Naive thymus-derived CD8-positive, alpha-beta T cell (primary cell): ENCODE measurements at regions of chr1 and their contacts with region 1.

Region 1: GRCh38 chr1:44819608-44820327 is 11.4 kb downstream of the BTBD19 start:
- DNase-seq: peak; percentile 61 to 98 (median 80)
- ATAC-seq: peak; percentile 78 to 79
- H3K4me3 Mint-ChIP-seq: peak overlapping the region; percentile 92 to 97 (median 94)
- H3K27ac Mint-ChIP-seq: peak overlapping the region; percentile 100
- H3K4me1 Mint-ChIP-seq: peaks cover 23 to 55% (median 42%) of the 10 kb centered on the region in 4 donors
- H3K27me3 Mint-ChIP-seq: no peaks in the 10 kb centered on the region

Region 2: DNA sequence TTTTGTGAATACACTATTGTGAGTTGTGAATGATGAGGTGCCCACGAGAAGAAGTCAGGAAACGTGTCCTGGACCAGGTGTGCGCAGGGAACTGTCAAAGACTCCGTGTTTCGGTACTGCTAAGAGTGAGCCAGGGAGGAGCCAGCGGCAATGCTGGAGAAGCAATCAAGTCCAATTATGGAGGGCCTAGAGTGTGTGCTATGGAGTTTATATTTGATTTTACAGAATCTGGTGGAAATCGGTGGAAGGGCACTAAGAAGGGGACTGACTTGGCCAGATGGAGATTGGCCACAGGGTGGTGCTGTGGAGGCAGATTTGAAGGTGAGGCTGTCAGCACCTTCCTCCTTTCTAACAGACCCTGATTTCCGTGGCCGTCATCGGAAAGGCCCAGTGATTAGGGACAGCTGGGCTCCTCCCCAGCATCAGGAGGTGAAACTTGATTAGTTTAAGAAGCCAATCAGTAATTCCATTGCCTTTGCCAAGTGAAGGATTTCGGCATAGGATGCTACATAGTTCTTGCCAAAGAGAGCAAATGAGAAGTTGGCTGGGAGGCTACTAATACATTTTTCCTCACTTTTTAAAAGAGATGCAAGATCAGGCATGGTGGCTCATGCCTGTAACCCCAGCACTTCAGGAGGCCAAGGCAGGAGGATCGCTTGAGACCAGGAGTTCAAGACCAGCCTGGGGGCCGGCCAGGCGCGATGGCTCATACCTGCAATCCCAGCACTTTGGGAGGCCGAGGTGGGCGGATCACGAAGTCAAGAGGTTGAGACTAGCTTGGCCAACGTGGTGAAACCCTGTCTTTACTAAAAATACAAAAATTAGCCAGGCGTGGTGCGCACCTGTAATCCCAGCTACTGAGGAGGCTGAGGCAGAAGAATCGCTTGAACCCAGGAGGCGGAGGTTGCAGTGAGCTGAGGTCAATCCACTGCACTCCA is 16.2 kb after region 1 on chr1:
- POLR2A ChIA-PET with region 1: interaction called, 17 read pairs
- DNase-seq: peak; percentile 65 to 92 (median 78)
- ATAC-seq: peak; percentile 97 to 98
- H3K4me3 Mint-ChIP-seq: peak overlapping the region in 9 of 10 donors; percentile 23 to 58 (median 47)
- H3K27ac Mint-ChIP-seq: peak overlapping the region in 7 of 10 donors; percentile 4 to 67 (median 34)
- H3K4me1 Mint-ChIP-seq: peaks cover 7 to 11% (median 9%) of the 10 kb centered on the region in 4 donors
- H3K27me3 Mint-ChIP-seq: peaks cover 0 to 8% (median 0%) of the 10 kb centered on the region in 5 donors

Region 3: GRCh38 chr1:45187725-45188124 is 368.0 kb after region 1 on chr1:
- POLR2A ChIA-PET with region 1: no interaction called
- DNase-seq: no peak
- ATAC-seq: no peak
- H3K4me3 Mint-ChIP-seq: no peak overlapping the region
- H3K27ac Mint-ChIP-seq: no peak overlapping the region
- H3K4me1 Mint-ChIP-seq: peaks cover 0 to 2% (median 2%) of the 10 kb centered on the region in 4 donors
- H3K27me3 Mint-ChIP-seq: no peaks in the 10 kb centered on the region